Common myeloid progenitor, CD34-positive (primary cell): ENCODE measurements at regions of chr21 and their contacts with region 1.

Region 1: DNA sequence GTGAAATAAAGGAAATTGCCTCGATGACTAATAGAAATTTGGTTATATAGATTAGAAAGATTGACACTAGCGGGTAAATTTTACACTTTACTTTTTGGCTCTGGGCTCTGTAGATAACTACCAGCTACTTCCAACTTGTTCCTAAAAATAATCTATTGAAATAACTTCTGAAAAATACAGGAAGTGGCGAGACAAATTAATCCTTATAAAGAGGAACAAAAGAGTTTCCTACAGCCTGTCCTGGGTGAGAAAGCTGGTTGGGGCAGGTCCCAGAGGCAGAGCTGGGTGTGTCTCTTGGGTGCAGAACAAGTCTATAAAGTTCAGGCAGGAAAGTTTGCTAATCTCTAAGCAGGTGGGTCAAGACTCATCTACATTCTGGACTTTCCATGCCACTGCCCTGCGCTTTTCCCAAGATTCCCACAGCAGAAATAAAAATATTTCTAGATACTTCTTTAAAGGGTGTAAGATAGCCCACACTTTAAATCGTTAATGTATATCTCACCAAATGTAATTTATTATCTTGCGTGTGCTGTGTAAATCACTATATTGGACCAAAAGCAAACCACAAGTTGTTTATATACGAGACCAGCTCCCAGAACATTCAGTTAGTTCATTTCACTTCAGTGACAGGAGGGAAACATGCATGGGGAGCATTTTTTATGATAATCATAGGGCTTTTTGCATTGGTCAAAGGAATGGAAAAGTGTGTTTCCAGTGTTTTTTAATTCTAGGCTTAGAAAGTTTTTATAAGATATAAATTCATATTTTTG is 70.1 kb upstream of the NRIP1 start:
- DNase-seq: peak; percentile 83 to 94 (median 89)
- H3K4me3 ChIP-seq: peak overlapping the region in 5 of 7 experiments; percentile 21 to 65 (median 46)
- H3K27ac ChIP-seq: peak overlapping the region; percentile 67 to 84
- H3K4me1 ChIP-seq: peaks cover 40 to 96% (median 53%) of the 10 kb centered on the region in 4 experiments
- H3K27me3 ChIP-seq: no peaks in the 10 kb centered on the region

Region 2: DNA sequence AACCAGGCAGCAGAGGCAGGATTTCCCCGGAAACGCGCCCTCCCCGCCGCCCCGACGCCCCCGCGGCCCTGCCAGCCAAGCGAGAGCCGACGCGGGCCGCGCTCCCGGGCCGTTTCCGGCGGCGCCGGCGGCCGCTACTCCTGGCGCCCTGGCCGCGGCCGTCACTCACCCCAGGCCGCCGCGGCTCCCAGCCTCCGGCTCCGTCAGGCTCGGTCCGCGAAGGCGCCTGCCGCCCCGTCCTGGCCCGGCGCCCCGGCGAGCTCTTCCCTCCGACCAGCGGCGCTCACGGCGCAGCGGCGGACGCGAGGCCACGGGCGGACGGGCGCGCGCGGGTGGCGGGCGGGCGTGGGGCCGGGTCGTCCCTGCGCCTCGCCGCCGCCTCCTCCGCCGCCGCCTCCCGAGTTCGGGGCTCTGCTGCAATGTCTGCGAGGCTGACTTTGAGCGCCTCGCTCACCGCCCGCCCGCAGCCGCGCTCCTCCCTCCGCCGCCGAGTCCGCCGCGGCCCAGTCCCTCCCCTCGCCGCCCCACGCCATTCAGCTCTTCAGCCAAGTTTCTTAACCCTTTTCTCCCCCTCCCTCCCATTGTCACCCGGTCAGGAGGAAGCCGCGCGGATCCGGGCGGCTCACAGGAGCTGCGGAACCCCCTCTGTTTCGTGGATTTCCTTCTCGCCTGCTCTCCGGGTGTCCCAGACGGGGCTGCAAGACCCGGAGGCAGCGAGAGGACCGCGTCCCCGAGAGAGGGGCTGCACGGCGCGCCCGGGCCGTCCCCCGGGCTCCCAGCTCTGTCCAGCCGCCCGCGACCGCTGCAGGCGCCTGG is 70.1 kb before region 1 on chr21 and contains the start of gene NRIP1:
- CTCF ChIA-PET with region 1: interaction called, 4 read pairs
- POLR2A ChIA-PET with region 1: interaction called, 13 read pairs
- DNase-seq: peak; percentile 93 to 98 (median 97)
- H3K4me3 ChIP-seq: peak within 1 kb of the TSS; percentile 80 to 100 (median 97)
- H3K27ac ChIP-seq: peak within 1 kb of the TSS; percentile 96 to 97
- H3K4me1 ChIP-seq: peaks cover 16 to 37% (median 31%) of the 10 kb centered on the region in 4 experiments
- H3K27me3 ChIP-seq: no peaks in the 10 kb centered on the region

Region 3: GRCh38 chr21:15121655-15122120 is 13.2 kb before region 1 on chr21:
- CTCF ChIA-PET with region 1: interaction called, 13 read pairs
- POLR2A ChIA-PET with region 1: interaction called, 3 read pairs
- DNase-seq: peak in 2 of 3 donors; percentile 54 to 73
- H3K4me3 ChIP-seq: peak overlapping the region in 1 of 7 experiments; percentile 12
- H3K27ac ChIP-seq: no peak overlapping the region
- H3K4me1 ChIP-seq: peaks cover 6 to 22% (median 9%) of the 10 kb centered on the region in 4 experiments
- H3K27me3 ChIP-seq: no peaks in the 10 kb centered on the region